ENCODE measurements at regions of chr16 and their contacts with region 1.

Region 1: GRCh38 chr16:29700253-29700987 is 21.4 kb downstream of the QPRT start:
- DNase-seq: peak; percentile 63 to 82 (median 75)
- ATAC-seq: peak; percentile 60
- H3K4me3 ChIP-seq: peak overlapping the region; percentile 41
- H3K4me3 Mint-ChIP-seq: peak overlapping the region; percentile 12 to 84 (median 75)
- H3K27ac ChIP-seq: no peak overlapping the region
- H3K27ac Mint-ChIP-seq: peak overlapping the region; percentile 87 to 99 (median 94)
- H3K4me1 ChIP-seq: peaks cover 31 to 32% of the 10 kb centered on the region in 2 donors
- H3K4me1 Mint-ChIP-seq: peaks cover 30 to 39% (median 32%) of the 10 kb centered on the region in 7 donors
- H3K27me3 ChIP-seq: no peaks in the 10 kb centered on the region
- H3K27me3 Mint-ChIP-seq: no peaks in the 10 kb centered on the region

Region 2: DNA sequence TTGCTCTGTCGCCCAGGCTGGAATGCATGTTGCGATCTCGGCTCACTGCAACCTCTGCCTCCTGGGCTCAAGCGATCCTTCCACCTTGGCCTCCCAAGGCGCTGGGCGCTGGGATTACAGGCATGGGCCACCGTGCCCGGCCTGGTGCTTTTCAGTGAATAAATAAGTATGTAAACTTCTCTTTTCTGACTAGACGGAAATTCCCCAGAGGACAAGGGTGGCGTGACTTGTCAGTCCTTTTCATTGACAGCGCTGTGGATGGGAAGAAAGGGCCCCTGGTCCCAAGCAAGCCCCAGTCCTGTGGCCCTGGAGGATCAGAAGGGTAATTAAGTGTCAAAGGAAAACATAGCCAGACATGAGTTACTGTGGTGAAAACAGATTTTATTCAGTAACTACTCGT is 46.9 kb before region 1 on chr16:
- CTCF ChIA-PET with region 1: no interaction called
- POLR2A ChIA-PET with region 1: no interaction called
- intact Hi-C with region 1: no loop called
- DNase-seq: no peak
- ATAC-seq: peak; percentile 69
- H3K4me3 ChIP-seq: no peak overlapping the region
- H3K4me3 Mint-ChIP-seq: no peak overlapping the region
- H3K27ac ChIP-seq: no peak overlapping the region
- H3K27ac Mint-ChIP-seq: no peak overlapping the region
- H3K4me1 ChIP-seq: no peaks in the 10 kb centered on the region
- H3K4me1 Mint-ChIP-seq: peaks cover 4 to 24% (median 13%) of the 10 kb centered on the region in 7 donors
- H3K27me3 ChIP-seq: no peaks in the 10 kb centered on the region
- H3K27me3 Mint-ChIP-seq: no peaks in the 10 kb centered on the region

Region 3: GRCh38 chr16:29710227-29711219 is 10.1 kb after region 1 on chr16:
- CTCF ChIA-PET with region 1: interaction called, 134 read pairs
- POLR2A ChIA-PET with region 1: interaction called, 34 read pairs
- intact Hi-C with region 1: loop called (anchors 1 kb)
- DNase-seq: peak in 7 of 9 donors; percentile 53 to 77 (median 66)
- ATAC-seq: peak; percentile 96
- H3K4me3 ChIP-seq: no peak overlapping the region
- H3K4me3 Mint-ChIP-seq: peak overlapping the region in 2 of 10 donors; percentile 2 to 16
- H3K27ac ChIP-seq: no peak overlapping the region
- H3K27ac Mint-ChIP-seq: peak overlapping the region in 8 of 9 donors; percentile 43 to 89 (median 60)
- H3K4me1 ChIP-seq: peaks cover 6% of the 10 kb centered on the region in 2 donors
- H3K4me1 Mint-ChIP-seq: peaks cover 8 to 15% (median 12%) of the 10 kb centered on the region in 7 donors
- H3K27me3 ChIP-seq: no peaks in the 10 kb centered on the region
- H3K27me3 Mint-ChIP-seq: peaks cover 0 to 18% (median 0%) of the 10 kb centered on the region in 5 donors

Region 4: DNA sequence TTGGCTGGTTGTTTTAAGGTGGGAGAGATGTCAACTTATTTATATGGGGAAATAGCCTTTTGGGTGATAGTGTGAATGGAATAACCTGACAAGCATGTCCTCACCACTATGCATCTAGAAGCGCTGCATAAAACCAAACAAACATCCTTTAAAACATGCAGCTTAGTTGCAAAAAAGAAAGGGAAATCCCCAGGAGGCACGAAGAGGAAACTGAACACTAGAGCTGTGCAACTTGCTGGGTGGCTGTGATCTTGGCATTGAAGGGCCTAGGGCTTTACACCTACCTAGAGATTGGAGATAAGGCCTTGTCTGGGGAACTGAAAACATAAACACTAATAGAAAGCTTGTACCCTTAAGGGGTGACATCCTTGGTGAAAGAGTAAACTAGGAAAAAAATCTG is 38.1 kb after region 1 on chr16:
- CTCF ChIA-PET with region 1: interaction called, 12 read pairs
- POLR2A ChIA-PET with region 1: interaction called, 38 read pairs
- intact Hi-C with region 1: loop called in 1 of 2 experiments (anchors 2 kb)
- DNase-seq: peak in 7 of 9 donors; percentile 66 to 86 (median 82)
- ATAC-seq: peak; percentile 90
- H3K4me3 ChIP-seq: peak overlapping the region; percentile 18
- H3K4me3 Mint-ChIP-seq: peak overlapping the region; percentile 50 to 96 (median 64)
- H3K27ac ChIP-seq: peak overlapping the region; percentile 80
- H3K27ac Mint-ChIP-seq: peak overlapping the region; percentile 82 to 99 (median 91)
- H3K4me1 ChIP-seq: peaks cover 69 to 70% of the 10 kb centered on the region in 2 donors
- H3K4me1 Mint-ChIP-seq: peaks cover 63 to 91% (median 84%) of the 10 kb centered on the region in 7 donors
- H3K27me3 ChIP-seq: no peaks in the 10 kb centered on the region
- H3K27me3 Mint-ChIP-seq: no peaks in the 10 kb centered on the region

Region 5: DNA sequence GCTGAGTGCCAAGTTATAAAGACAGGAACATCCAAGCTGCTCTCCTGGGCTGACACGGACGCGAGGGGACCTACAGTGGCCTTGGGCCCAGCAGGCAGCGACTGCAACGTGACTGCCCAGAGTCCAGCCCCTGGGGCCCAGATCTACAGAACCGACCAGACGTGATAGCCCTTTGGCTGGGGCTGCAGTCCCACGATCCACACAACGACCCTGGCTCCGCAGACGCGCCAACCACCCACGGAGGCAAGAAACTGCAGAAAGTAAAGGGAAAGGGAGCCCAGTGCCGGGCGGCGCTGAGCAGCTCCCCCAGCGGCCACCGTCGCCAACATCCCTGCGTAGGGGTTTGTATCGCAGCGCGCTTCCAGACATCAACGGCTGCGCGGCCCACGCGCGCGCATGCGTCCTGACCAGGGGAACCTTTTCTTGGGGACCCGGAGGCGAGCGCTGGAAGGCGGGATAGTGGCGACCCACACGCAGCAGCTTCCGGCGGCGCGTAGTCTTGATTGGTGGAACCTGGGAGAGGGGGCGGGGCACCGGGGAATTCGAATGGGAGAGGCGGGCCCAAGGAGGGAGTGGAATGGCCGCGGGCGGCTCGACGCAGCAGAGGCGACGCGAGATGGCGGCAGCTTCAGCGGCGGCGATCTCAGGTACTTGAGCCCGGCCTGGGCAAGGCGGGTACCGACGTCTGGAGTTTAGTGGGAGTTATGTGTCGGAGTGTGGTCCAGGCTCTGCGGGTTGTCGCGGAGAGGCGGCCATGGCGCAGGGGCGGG is 89.9 kb after region 1 on chr16 and contains the start of gene KIF22:
- CTCF ChIA-PET with region 1: interaction called, 40 read pairs
- POLR2A ChIA-PET with region 1: interaction called, 62 read pairs
- intact Hi-C with region 1: loop called (anchors 1 kb)
- DNase-seq: peak; percentile 98 to 100 (median 100)
- ATAC-seq: peak; percentile 98
- H3K4me3 ChIP-seq: peak within 1 kb of the TSS; percentile 83
- H3K4me3 Mint-ChIP-seq: peak within 1 kb of the TSS; percentile 92 to 100 (median 98)
- H3K27ac ChIP-seq: peak within 1 kb of the TSS; percentile 88
- H3K27ac Mint-ChIP-seq: peak within 1 kb of the TSS; percentile 93 to 99 (median 99)
- H3K4me1 ChIP-seq: peaks cover 21 to 29% of the 10 kb centered on the region in 2 donors
- H3K4me1 Mint-ChIP-seq: peaks cover 23 to 59% (median 46%) of the 10 kb centered on the region in 7 donors
- H3K27me3 ChIP-seq: no peaks in the 10 kb centered on the region
- H3K27me3 Mint-ChIP-seq: peaks cover 0 to 2% (median 0%) of the 10 kb centered on the region in 5 donors
- total RNA-seq, gene KIF22: 62.5 to 141 (median 81.3) TPM

Region 6: DNA sequence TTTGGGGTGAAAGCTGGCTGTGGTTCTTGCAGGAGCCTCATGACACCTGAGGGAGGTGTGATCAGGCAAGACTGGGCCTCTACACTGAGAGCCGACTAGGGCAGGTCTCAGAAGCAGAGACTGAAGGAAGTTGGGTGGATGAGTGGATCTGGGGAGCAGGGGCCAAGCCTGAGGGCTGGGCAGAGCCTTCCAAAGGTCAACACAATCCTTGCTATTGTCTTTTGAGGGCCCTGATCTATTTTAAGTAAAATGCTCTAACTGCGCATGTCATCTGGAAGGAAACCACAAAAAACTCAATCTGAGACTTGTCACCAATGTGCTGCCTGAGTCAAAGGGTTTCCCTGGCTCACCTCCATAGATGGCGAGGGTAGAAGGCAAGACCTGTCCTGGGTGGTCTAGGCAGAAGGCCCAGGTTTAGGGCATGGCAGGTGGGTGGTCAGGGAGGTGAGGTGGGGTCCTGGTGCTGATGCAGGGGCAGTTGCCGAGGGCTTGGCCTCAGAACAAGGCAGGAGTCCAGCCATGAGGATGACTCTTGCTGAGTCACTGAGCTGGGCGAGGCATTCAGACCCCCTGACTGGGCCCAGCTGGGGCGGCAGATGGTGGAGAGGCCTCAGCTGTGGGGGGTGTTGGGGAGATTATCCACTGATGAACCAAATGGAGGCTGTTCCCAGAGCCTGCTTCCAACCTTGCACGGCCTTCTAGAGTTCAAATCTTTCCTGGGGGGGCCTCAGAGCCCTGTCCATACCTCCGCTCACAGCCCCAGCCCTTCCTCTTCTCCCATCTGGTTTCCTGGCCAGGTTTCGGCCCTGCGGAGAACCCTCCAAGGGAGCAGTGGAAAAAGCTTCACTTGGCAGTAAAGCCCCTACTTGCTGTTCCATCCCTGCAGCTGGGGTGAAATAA is 125.0 kb after region 1 on chr16:
- CTCF ChIA-PET with region 1: interaction called, 55 read pairs
- POLR2A ChIA-PET with region 1: interaction called, 76 read pairs
- intact Hi-C with region 1: loop called in 1 of 2 experiments (anchors 1 kb)
- DNase-seq: peak in 6 of 9 donors; percentile 36 to 52 (median 43)
- ATAC-seq: no peak
- H3K4me3 ChIP-seq: peak overlapping the region; percentile 44
- H3K4me3 Mint-ChIP-seq: peak overlapping the region; percentile 70 to 95 (median 86)
- H3K27ac ChIP-seq: peak overlapping the region; percentile 72
- H3K27ac Mint-ChIP-seq: peak overlapping the region; percentile 56 to 99 (median 96)
- H3K4me1 ChIP-seq: peaks cover 61 to 81% of the 10 kb centered on the region in 2 donors
- H3K4me1 Mint-ChIP-seq: peaks cover 39 to 97% (median 57%) of the 10 kb centered on the region in 7 donors
- H3K27me3 ChIP-seq: no peaks in the 10 kb centered on the region
- H3K27me3 Mint-ChIP-seq: no peaks in the 10 kb centered on the region

Region 7: GRCh38 chr16:29926005-29926710 is 225.7 kb after region 1 on chr16 and contains the start of gene KCTD13:
- CTCF ChIA-PET with region 1: no interaction called
- POLR2A ChIA-PET with region 1: interaction called, 4 read pairs
- intact Hi-C with region 1: loop called in 1 of 2 experiments (anchors 5 kb)
- DNase-seq: peak; percentile 81 to 99 (median 92)
- ATAC-seq: peak; percentile 96
- H3K4me3 ChIP-seq: peak within 1 kb of the TSS; percentile 88
- H3K4me3 Mint-ChIP-seq: peak within 1 kb of the TSS; percentile 89 to 95 (median 93)
- H3K27ac ChIP-seq: peak within 1 kb of the TSS; percentile 94
- H3K27ac Mint-ChIP-seq: peak within 1 kb of the TSS; percentile 91 to 98 (median 97)
- H3K4me1 ChIP-seq: peaks cover 7 to 18% of the 10 kb centered on the region in 2 donors
- H3K4me1 Mint-ChIP-seq: peaks cover 30 to 50% (median 40%) of the 10 kb centered on the region in 7 donors
- H3K27me3 ChIP-seq: no peaks in the 10 kb centered on the region
- H3K27me3 Mint-ChIP-seq: peaks cover 0 to 2% (median 0%) of the 10 kb centered on the region in 5 donors
- total RNA-seq, gene KCTD13: 40.7 to 81.1 (median 45.9) TPM

Region 8: GRCh38 chr16:30018731-30019158 is 318.3 kb after region 1 on chr16:
- CTCF ChIA-PET with region 1: interaction called, 5 read pairs
- POLR2A ChIA-PET with region 1: interaction called, 3 read pairs
- intact Hi-C with region 1: loop called (anchors 1 kb)
- DNase-seq: no peak
- ATAC-seq: no peak
- H3K4me3 ChIP-seq: no peak overlapping the region
- H3K4me3 Mint-ChIP-seq: peak overlapping the region in 1 of 10 donors; percentile 0
- H3K27ac ChIP-seq: no peak overlapping the region
- H3K27ac Mint-ChIP-seq: no peak overlapping the region
- H3K4me1 ChIP-seq: peaks cover 8% of the 10 kb centered on the region in 2 donors
- H3K4me1 Mint-ChIP-seq: peaks cover 5 to 17% (median 10%) of the 10 kb centered on the region in 7 donors
- H3K27me3 ChIP-seq: no peaks in the 10 kb centered on the region
- H3K27me3 Mint-ChIP-seq: peaks cover 0 to 29% (median 0%) of the 10 kb centered on the region in 5 donors

Region 9: DNA sequence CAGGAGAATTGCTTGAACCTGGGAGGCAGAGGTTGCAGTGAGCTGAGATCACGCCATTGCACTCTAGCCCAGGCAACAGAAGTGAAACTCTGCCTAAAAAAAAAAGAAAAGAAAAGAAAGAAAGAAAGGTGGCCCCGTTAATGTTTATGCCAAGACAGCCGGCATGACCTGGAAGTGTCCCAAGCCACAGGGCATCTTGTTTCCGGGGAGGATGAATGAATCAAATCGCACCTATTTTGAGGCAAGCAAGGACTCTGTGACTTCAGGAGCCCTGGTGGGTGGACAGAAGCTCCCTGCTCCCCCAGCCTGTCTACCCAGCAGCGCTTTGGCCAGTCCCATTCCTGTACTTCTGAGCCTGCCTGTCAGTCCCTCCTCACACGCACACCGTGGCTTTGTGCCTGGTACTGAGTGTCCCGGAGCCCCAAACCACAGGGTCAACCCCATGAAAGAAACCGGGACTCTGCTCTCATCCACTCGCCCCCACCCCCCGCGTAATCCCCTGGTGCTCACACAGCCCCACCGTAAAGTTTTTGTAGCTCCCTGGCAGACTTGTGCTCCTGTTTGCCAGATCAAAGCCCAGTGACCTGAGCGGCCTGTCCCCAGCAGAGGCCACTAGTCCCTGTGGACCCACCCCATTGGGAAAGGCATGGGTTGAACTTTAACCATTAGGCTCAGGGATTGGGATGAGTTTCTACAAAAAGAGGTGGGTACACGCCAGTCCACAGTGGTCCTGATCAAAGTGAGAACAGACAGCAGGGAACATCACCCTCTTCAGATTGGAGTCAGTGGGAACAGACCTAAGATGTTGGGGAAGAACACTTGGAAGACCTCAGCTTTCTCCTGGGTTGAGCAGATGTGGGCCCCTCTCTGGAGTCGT is 635.4 kb after region 1 on chr16:
- CTCF ChIA-PET with region 1: no interaction called
- POLR2A ChIA-PET with region 1: no interaction called
- intact Hi-C with region 1: no loop called
- DNase-seq: peak in 1 of 9 donors; percentile 26
- ATAC-seq: no peak
- H3K4me3 ChIP-seq: peak overlapping the region; percentile 50
- H3K4me3 Mint-ChIP-seq: peak overlapping the region; percentile 80 to 96 (median 87)
- H3K27ac ChIP-seq: peak overlapping the region; percentile 74
- H3K27ac Mint-ChIP-seq: peak overlapping the region; percentile 57 to 91 (median 81)
- H3K4me1 ChIP-seq: peaks cover 7% of the 10 kb centered on the region in 2 donors
- H3K4me1 Mint-ChIP-seq: peaks cover 3 to 30% (median 17%) of the 10 kb centered on the region in 7 donors
- H3K27me3 ChIP-seq: no peaks in the 10 kb centered on the region
- H3K27me3 Mint-ChIP-seq: no peaks in the 10 kb centered on the region